ENCODE measurements at regions of chr5 and their contacts with region 1.

Region 1: GRCh38 chr5:60668686-60669304 is 31.2 kb downstream of the DEPDC1B start:
- DNase-seq: no peak
- ATAC-seq: no peak; the same call in 2 of the 3 replicates
- H3K4me3 ChIP-seq: no peak overlapping the region
- H3K27ac ChIP-seq: no peak overlapping the region
- H3K4me1 ChIP-seq: no peaks in the 10 kb centered on the region
- H3K27me3 ChIP-seq: no peaks in the 10 kb centered on the region
- CTCF ChIP-seq: peak; percentile 31 to 56 (median 46); a peak in 4 of 6 replicates
- EP300 ChIP-seq: no peak
- POLR2A ChIP-seq: no peak
- RAD21 ChIP-seq: peak; percentile 45

Region 2: GRCh38 chr5:60287174-60287771 is 381.5 kb before region 1 on chr5:
- CTCF ChIA-PET with region 1: interaction called, 12 read pairs
- POLR2A ChIA-PET with region 1: no interaction called
- RAD21 ChIA-PET with region 1: no interaction called
- SMC1A ChIA-PET with region 1: interaction called, 5 read pairs
- in situ Hi-C with region 1: no loop called
- intact Hi-C with region 1: no loop called
- DNase-seq: no peak
- ATAC-seq: peak; percentile 98
- H3K4me3 ChIP-seq: no peak overlapping the region
- H3K27ac ChIP-seq: no peak overlapping the region
- H3K4me1 ChIP-seq: no peaks in the 10 kb centered on the region
- H3K27me3 ChIP-seq: no peaks in the 10 kb centered on the region
- CTCF ChIP-seq: peak; percentile 70 to 82 (median 72)
- EP300 ChIP-seq: no peak
- POLR2A ChIP-seq: no peak
- RAD21 ChIP-seq: peak; percentile 64

Region 3: DNA sequence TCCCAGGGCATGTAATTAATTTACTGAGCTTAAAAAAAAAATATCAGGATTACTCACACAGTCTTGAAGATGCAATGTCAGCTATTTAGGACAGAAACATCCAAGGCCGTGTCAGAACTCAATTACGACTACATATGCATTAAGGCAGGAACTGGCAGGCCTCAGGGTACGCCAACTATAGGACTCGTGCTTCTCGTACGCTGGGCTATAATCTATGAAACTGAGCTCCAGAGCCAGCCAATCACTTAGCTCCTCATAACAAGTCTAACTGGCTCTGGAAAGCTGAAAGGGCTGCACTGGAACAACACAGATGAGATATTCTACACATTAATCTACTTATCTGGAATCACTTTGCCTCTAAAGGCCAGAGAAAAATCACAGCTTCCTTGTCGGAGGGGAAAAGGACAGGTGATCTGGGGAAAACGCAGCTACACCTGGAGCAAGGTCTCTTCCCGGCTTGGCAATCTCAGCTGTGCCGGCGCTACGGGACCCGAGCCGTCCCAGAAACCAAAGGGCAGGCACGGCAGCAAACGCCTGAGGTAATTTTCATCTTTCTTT is 180.8 kb before region 1 on chr5:
- CTCF ChIA-PET with region 1: no interaction called
- POLR2A ChIA-PET with region 1: no interaction called
- RAD21 ChIA-PET with region 1: no interaction called
- SMC1A ChIA-PET with region 1: no interaction called
- in situ Hi-C with region 1: no loop called
- intact Hi-C with region 1: no loop called
- DNase-seq: no peak
- ATAC-seq: no peak
- H3K4me3 ChIP-seq: no peak overlapping the region
- H3K27ac ChIP-seq: no peak overlapping the region
- H3K4me1 ChIP-seq: no peaks in the 10 kb centered on the region
- H3K27me3 ChIP-seq: no peaks in the 10 kb centered on the region
- CTCF ChIP-seq: no peak
- EP300 ChIP-seq: no peak
- POLR2A ChIP-seq: no peak
- RAD21 ChIP-seq: no peak

Region 4: GRCh38 chr5:60649283-60649917 is 19.4 kb before region 1 on chr5:
- CTCF ChIA-PET with region 1: interaction called, 13 read pairs
- POLR2A ChIA-PET with region 1: no interaction called
- RAD21 ChIA-PET with region 1: no interaction called
- SMC1A ChIA-PET with region 1: interaction called, 4 read pairs
- in situ Hi-C with region 1: no loop called
- intact Hi-C with region 1: no loop called
- DNase-seq: peak; percentile 15
- ATAC-seq: peak; percentile 86
- H3K4me3 ChIP-seq: no peak overlapping the region
- H3K27ac ChIP-seq: no peak overlapping the region
- H3K4me1 ChIP-seq: no peaks in the 10 kb centered on the region
- H3K27me3 ChIP-seq: no peaks in the 10 kb centered on the region
- CTCF ChIP-seq: peak; percentile 49 to 70 (median 59); a peak in 5 of 6 replicates
- EP300 ChIP-seq: no peak
- POLR2A ChIP-seq: no peak
- RAD21 ChIP-seq: peak; percentile 81

Region 5: GRCh38 chr5:60687927-60688720 is 19.3 kb after region 1 on chr5:
- CTCF ChIA-PET with region 1: interaction called, 14 read pairs
- POLR2A ChIA-PET with region 1: no interaction called
- RAD21 ChIA-PET with region 1: no interaction called
- SMC1A ChIA-PET with region 1: interaction called, 5 read pairs
- in situ Hi-C with region 1: no loop called
- intact Hi-C with region 1: no loop called
- DNase-seq: no peak
- ATAC-seq: peak; percentile 98
- H3K4me3 ChIP-seq: no peak overlapping the region
- H3K27ac ChIP-seq: no peak overlapping the region
- H3K4me1 ChIP-seq: no peaks in the 10 kb centered on the region
- H3K27me3 ChIP-seq: no peaks in the 10 kb centered on the region
- CTCF ChIP-seq: peak; percentile 2 to 49 (median 45); a peak in 3 of 6 replicates
- EP300 ChIP-seq: no peak
- POLR2A ChIP-seq: no peak
- RAD21 ChIP-seq: no peak

Measured in GM12878 (cell line).